ENCODE measurements at regions of chr1 and their contacts with region 1.

Region 1: GRCh38 chr1:15028102-15028501 is 125.4 kb upstream of the TMEM51 start:
- DNase-seq: peak in 1 of 2 donors; percentile 28
- H3K4me3 ChIP-seq: no peak overlapping the region
- H3K27ac ChIP-seq: no peak overlapping the region
- H3K4me1 ChIP-seq: peaks cover 0 to 12% (median 2%) of the 10 kb centered on the region in 4 donors
- H3K27me3 ChIP-seq: no peaks in the 10 kb centered on the region
- CTCF ChIP-seq: no peak
- EP300 ChIP-seq: no peak
- POLR2A ChIP-seq: no peak

Region 2: GRCh38 chr1:14794136-14794768 is 233.8 kb before region 1 on chr1:
- intact Hi-C with region 1: no loop called
- DNase-seq: no peak
- H3K4me3 ChIP-seq: no peak overlapping the region
- H3K27ac ChIP-seq: peak overlapping the region in 1 of 5 donors; percentile 20
- H3K4me1 ChIP-seq: peaks cover 0 to 10% (median 7%) of the 10 kb centered on the region in 4 donors
- H3K27me3 ChIP-seq: no peaks in the 10 kb centered on the region
- CTCF ChIP-seq: no peak
- EP300 ChIP-seq: no peak
- POLR2A ChIP-seq: no peak

Region 3: DNA sequence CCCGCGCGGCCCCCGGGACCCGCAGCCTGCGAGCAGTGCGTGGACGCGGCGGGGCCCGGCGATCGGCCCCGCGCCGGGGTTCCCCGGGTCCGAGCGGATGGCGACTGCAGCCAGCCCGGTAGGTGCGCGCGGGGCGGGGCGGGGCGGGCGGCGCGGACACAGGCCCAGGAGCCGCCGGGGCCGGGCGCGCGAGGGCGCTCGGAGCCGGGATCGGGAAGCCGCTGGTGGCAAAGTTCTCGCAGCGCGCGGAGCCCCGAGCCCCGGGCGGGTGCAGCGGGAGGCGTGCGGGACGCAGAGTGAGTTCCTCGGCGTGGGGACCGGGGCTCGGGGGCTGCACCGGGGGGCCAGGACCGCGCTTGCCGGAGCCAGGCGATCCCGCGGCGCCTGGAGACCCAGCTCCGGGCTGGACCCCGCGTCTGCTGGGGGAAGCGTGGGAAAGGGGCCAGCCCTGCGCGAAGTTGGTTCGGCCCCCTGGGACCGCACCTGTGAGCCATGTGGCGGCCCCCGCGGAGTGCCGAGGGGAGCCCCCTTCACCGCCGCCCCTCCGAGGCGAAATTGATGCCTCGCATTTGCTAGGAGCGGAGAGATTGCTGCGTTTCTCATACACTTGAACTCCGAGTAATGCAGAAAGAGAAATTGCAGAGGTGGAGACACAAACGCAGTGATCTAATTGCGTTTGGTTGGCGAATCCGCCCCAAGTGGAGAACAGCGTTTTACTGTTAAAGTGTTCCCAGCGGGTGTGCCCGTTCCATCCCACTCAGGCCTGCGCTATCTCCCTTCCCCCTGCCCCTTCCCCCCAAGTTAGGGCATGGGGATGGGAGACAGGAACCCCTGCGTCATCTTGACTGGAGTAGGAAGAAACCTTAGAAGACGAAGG is 103.4 kb before region 1 on chr1:
- intact Hi-C with region 1: loop called (anchors 5 kb)
- DNase-seq: peak; percentile 57 to 81
- H3K4me3 ChIP-seq: peak overlapping the region; percentile 57 to 91 (median 72)
- H3K27ac ChIP-seq: peak overlapping the region; percentile 29 to 81 (median 73)
- H3K4me1 ChIP-seq: peaks cover 14 to 31% (median 18%) of the 10 kb centered on the region in 4 donors
- H3K27me3 ChIP-seq: peaks cover 0 to 61% (median 7%) of the 10 kb centered on the region in 3 donors
- CTCF ChIP-seq: peak in 1 of 7 experiments; percentile 17
- EP300 ChIP-seq: no peak
- POLR2A ChIP-seq: no peak